PC-9 (cell line): ENCODE measurements at regions of chr1 and their contacts with region 1.

Region 1: GRCh38 chr1:151459331-151460046 is at the start of gene POGZ:
- DNase-seq: peak; percentile 79 to 90
- H3K4me3 ChIP-seq: peak within 1 kb of the TSS; percentile 80
- H3K27ac ChIP-seq: peak within 1 kb of the TSS; percentile 72
- H3K4me1 ChIP-seq: peaks cover 17% of the 10 kb centered on the region
- H3K27me3 ChIP-seq: no peaks in the 10 kb centered on the region
- CTCF ChIP-seq: no peak
- total RNA-seq, gene POGZ: 63.3 and 71.0 TPM in 2 replicates

Region 2: DNA sequence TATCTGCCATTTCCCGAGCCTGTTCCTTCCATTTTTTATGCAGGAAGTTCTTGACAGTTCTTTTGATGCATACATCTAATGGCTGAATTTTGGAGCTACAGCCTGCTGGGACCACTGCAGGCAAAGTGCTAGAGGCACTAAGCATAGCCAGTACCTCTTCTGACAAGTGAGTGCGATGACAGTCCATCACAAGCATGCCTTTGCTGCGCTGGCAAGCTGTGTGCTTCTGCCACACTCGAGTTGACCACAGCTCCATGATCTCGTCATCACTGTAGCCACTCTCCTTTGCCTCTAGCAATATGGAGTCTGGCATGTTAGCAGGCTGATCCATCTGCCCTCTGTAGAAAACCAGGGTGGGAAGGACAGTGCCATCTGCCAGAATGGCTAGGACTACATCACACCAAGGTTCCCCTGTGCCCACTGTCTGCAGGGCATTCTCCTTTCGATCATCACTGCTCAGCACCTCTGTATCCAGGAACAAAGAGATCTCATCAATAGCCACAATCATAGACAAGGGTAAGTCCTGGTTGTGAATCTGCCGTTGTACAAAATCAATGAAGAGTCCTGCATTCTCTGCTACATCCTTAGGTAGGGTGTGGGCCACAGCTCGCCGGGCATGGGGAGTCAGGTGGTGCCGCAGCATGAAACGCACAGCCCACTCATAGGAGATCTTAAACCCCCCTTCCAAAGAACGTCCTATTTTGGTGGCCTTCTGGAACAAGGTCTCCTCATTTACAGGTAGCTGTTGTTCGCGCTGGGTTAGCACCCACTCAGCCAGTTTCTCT is 54.1 kb before region 1 on chr1:
- CTCF ChIA-PET with region 1: no interaction called
- POLR2A ChIA-PET with region 1: no interaction called
- intact Hi-C with region 1: no loop called
- DNase-seq: no peak
- H3K4me3 ChIP-seq: no peak overlapping the region
- H3K27ac ChIP-seq: no peak overlapping the region
- H3K4me1 ChIP-seq: peaks cover 10% of the 10 kb centered on the region
- H3K27me3 ChIP-seq: no peaks in the 10 kb centered on the region
- CTCF ChIP-seq: no peak

Region 3: DNA sequence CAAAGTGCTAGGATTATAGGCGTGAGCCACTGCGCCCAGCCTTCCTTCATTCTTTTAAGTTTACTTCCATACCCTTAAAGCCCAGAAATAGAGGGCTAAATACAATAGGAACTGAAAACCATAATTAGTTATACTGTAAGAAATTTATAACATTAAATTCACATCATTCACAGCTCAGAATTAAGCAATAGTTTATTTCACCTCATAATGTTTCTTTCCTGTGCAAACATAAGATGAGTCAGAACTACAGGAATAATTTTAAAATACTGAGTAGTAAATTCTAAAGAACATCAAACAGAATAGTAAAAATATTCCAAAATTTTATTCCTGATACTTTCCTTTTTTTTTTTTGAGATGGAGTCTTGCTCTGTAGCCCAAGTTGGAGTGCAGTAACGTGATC is 24.3 kb before region 1 on chr1:
- CTCF ChIA-PET with region 1: no interaction called
- POLR2A ChIA-PET with region 1: no interaction called
- intact Hi-C with region 1: no loop called
- DNase-seq: peak in 1 of 2 experiments; percentile 48
- H3K4me3 ChIP-seq: no peak overlapping the region
- H3K27ac ChIP-seq: 0 out of 2 replicates have a peak overlapping the region, but pooled peaks have one; percentile 18
- H3K4me1 ChIP-seq: peaks cover 17% of the 10 kb centered on the region; the same call in 1 of the 2 replicates
- H3K27me3 ChIP-seq: no peaks in the 10 kb centered on the region
- CTCF ChIP-seq: no peak

Region 4: DNA sequence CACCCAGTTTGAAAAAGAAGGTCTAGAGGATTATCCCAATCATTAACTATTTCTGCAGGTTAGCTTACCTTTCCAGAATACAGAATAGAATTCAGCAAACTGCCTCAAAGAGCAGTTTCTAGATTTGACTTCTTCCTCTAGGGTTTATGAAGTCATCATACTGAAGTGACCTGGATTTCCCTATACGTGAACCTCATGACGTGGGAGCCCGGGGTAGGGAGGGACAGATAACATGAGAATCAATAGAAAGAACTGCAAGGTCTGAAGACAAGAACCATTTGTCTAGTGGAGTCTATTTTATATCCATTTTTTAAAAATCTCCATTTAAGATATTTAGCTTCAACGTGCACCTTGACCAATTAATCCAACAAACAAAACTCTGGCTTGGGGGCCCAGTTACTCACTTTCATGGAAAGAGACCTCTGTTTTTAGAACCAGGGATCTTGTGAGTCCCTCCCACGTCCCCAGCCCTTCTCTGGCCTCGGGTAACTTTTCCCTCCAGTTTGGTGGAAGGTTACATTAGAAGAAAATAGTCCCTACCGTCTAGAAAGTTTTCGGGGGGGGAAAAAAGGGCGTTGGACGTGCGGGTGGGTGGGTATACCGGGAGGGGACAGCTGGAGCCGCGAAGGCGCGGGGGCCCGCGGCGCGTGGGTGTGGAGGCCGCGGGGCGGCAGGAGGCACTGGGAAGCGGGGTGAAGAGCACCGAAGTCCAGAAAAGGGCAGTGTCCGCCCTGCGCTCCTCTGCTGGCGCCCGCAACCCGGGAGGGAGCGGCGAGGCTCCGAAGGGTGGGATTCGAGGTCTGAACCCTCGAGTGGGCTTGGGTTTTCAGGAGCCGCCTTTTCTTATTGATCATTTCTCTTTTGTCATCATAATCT is 13.6 kb after region 1 on chr1:
- CTCF ChIA-PET with region 1: no interaction called
- POLR2A ChIA-PET with region 1: interaction called, 4 read pairs
- intact Hi-C with region 1: loop called (anchors 1 kb)
- DNase-seq: peak; percentile 30 to 38
- H3K4me3 ChIP-seq: peak overlapping the region; percentile 60
- H3K27ac ChIP-seq: no peak overlapping the region
- H3K4me1 ChIP-seq: peaks cover 11% of the 10 kb centered on the region; the same call in 1 of the 2 replicates
- H3K27me3 ChIP-seq: no peaks in the 10 kb centered on the region
- CTCF ChIP-seq: no peak

Region 5: DNA sequence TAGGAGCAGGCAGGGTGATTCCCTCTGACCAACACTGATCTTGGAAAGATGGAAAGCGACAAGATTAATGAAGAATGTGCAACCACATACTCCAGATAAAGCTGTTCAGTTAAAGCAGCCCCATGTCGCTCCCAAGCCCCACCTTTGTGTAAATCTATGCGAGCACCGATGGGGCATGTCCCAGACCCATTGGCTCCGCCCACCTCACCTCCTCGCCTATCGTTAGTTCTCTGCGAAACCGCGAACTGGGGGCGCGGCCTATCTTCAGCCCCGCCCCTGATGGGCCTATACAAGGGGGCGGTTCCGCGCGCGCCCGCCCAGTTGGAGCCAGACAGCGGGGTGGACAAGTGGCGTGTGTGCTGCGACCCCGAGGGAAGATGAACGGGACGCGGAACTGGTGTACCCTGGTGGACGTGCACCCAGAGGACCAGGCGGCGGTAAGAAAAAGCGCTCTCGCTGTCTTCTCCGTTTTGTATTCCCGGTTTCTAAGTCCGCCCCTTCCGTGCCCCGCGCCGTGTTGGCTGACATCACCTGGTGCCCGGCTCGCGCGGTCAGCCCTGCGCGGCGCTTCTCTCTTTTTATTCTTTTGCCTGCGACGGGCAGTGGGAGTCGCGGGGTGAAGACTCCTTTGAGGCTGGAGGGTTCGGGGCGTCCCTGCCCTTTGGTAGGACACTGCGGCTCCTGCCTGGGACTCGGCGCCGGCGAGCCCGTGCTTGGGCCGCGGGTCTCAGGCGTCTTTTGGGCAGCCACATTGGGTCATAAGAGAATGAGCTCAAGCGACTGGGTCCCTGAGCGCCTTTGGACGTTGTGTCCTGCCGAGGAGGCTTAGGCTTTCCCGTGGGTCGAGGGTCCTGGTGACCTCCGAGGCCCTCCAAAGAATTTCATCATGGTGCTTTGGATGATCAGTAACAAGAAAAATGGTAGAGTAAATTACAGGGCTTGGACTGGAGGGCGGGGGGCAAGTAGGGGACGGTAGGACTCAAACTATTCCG is 80.8 kb after region 1 on chr1 and contains the start of gene TUFT1:
- CTCF ChIA-PET with region 1: no interaction called
- POLR2A ChIA-PET with region 1: interaction called, 12 read pairs
- intact Hi-C with region 1: loop called (anchors 1 kb)
- DNase-seq: peak; percentile 85 to 95
- H3K4me3 ChIP-seq: peak within 1 kb of the TSS; percentile 92
- H3K27ac ChIP-seq: peak within 1 kb of the TSS; percentile 95
- H3K4me1 ChIP-seq: peaks cover 60% of the 10 kb centered on the region
- H3K27me3 ChIP-seq: no peaks in the 10 kb centered on the region
- CTCF ChIP-seq: no peak
- total RNA-seq, gene TUFT1: 35.3 and 40.2 TPM in 2 replicates

Region 6: DNA sequence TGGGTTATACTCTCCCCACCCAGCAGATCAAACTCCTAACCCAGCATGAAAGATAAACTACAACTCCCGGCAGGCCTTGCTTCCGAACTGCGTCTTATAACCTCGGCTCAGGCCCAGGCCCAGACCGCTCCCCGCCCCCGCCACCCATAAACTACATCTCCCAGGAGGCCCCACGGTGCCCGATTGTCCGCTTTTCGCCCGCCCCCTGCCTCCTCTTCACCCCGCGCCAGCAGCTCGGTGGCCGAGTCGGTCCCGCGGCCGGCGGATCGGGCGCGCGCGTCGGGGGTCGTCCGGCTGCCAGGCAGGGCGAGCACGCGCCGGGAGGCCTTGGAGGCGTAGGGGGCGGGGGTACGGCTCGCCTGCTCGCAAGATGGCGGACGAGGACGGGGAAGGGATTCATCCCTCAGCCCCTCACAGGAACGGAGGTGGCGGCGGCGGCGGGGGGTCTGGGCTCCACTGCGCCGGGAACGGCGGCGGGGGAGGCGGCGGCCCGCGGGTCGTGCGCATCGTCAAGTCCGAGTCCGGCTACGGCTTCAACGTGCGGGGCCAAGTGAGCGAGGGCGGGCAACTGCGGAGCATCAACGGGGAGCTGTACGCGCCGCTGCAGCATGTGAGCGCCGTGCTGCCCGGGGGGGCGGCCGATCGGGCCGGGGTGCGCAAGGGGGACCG is 152.5 kb after region 1 on chr1 and contains the start of gene SNX27:
- CTCF ChIA-PET with region 1: no interaction called
- POLR2A ChIA-PET with region 1: interaction called, 17 read pairs
- intact Hi-C with region 1: no loop called
- DNase-seq: peak; percentile 78 to 83
- H3K4me3 ChIP-seq: peak within 1 kb of the TSS; percentile 71
- H3K27ac ChIP-seq: peak within 1 kb of the TSS; percentile 88
- H3K4me1 ChIP-seq: peaks cover 74% of the 10 kb centered on the region
- H3K27me3 ChIP-seq: no peaks in the 10 kb centered on the region
- CTCF ChIP-seq: no peak
- total RNA-seq, gene SNX27: 24.6 and 40.1 TPM in 2 replicates